Esophagus muscularis mucosa (tissue), 4 donors: ENCODE measurements at regions of chr2 and their contacts with region 1.

Region 1: GRCh38 chr2:26577434-26578112 is 63.6 kb downstream of the CIB4 start:
- DNase-seq: no peak
- H3K4me3 ChIP-seq: no peak overlapping the region
- H3K27ac ChIP-seq: no peak overlapping the region
- H3K4me1 ChIP-seq: no peaks in the 10 kb centered on the region
- H3K27me3 ChIP-seq: no peaks in the 10 kb centered on the region
- CTCF ChIP-seq: peak; percentile 91 to 98 (median 96)
- EP300 ChIP-seq: no peak
- POLR2A ChIP-seq: no peak

Region 2: DNA sequence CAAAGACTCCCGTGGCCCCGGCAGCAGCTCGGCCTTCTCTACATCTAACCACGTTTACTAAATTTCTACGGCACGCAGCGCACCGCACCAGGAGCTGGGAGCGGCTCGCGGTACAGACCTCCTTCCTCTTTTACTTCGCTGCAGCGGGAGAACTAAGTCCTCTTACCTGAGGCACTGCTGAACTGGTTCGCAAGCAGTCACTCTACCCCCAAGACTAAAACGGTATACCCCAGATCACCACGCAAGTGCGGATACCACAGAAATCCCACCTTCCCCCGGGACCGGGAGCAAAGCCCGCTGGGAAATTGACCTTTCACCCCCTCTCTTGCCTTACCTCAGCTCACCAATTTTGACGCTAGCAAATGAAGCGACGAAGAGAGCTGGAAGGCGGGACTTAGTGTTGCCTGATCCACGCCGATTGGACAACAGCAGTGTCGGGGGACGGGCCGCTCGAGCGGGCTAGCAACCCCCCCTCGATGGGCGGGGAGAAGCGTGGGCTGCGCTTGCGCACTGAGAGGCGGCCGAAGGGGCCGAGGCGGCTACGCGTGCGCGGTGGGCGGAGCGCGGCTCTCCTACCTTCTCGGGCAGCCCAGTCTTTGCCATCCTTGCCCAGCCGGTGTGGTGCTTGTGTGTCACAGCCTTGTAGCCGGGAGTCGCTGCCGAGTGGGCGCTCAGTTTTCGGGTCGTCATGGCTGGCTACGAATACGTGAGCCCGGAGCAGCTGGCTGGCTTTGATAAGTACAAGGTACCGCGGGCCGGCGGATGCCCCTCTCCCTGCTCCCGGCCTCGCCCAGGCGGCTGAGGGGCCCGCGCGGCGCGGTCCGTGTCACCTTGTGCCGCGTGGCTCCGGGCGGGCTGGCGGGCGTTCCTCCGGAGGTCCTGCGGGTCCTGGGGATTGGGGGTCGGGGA is 231.8 kb before region 1 on chr2 and contains the start of gene SELENOI:
- intact Hi-C with region 1: loop called (anchors 10 kb)
- DNase-seq: peak; percentile 99
- H3K4me3 ChIP-seq: peak within 1 kb of the TSS; percentile 78 to 89 (median 86)
- H3K27ac ChIP-seq: peak within 1 kb of the TSS; percentile 93 to 97 (median 94)
- H3K4me1 ChIP-seq: peaks cover 16 to 35% (median 30%) of the 10 kb centered on the region in 4 donors
- H3K27me3 ChIP-seq: no peaks in the 10 kb centered on the region
- CTCF ChIP-seq: no peak
- EP300 ChIP-seq: no peak
- POLR2A ChIP-seq: peak; percentile 88
- total RNA-seq, gene SELENOI: 6.4 to 11.2 (median 9.3) TPM

Region 3: GRCh38 chr2:26503231-26503880 is 74.2 kb before region 1 on chr2:
- intact Hi-C with region 1: loop called (anchors 5 kb)
- DNase-seq: no peak
- H3K4me3 ChIP-seq: peak overlapping the region; percentile 45 to 59 (median 48)
- H3K27ac ChIP-seq: no peak overlapping the region
- H3K4me1 ChIP-seq: peaks cover 9 to 13% (median 12%) of the 10 kb centered on the region in 4 donors
- H3K27me3 ChIP-seq: peaks cover 0 to 19% (median 0%) of the 10 kb centered on the region in 4 donors
- CTCF ChIP-seq: peak; percentile 71 to 82 (median 71)
- EP300 ChIP-seq: no peak
- POLR2A ChIP-seq: no peak

Region 4: GRCh38 chr2:26561918-26562810 is 15.4 kb before region 1 on chr2:
- intact Hi-C with region 1: no loop called
- DNase-seq: no peak
- H3K4me3 ChIP-seq: peak overlapping the region; percentile 51 to 61 (median 56)
- H3K27ac ChIP-seq: peak overlapping the region in 1 of 4 donors; percentile 44
- H3K4me1 ChIP-seq: peaks cover 16 to 20% (median 19%) of the 10 kb centered on the region in 4 donors
- H3K27me3 ChIP-seq: peaks cover 0 to 62% (median 0%) of the 10 kb centered on the region in 4 donors
- CTCF ChIP-seq: peak in 1 of 3 experiments; percentile 40
- EP300 ChIP-seq: no peak
- POLR2A ChIP-seq: no peak